GM10248 (cell line): ENCODE measurements at regions of chr2 and their contacts with region 1.

Region 1: GRCh38 chr2:157336137-157337010 is 10.8 kb upstream of the ERMN start:
- DNase-seq: peak; percentile 22
- CTCF ChIP-seq: peak; percentile 66

Region 2: GRCh38 chr2:157349949-157350515 is 13.7 kb after region 1 on chr2:
- CTCF ChIA-PET with region 1: interaction called, 134 read pairs
- POLR2A ChIA-PET with region 1: no interaction called
- DNase-seq: no peak
- CTCF ChIP-seq: no peak

Region 3: DNA sequence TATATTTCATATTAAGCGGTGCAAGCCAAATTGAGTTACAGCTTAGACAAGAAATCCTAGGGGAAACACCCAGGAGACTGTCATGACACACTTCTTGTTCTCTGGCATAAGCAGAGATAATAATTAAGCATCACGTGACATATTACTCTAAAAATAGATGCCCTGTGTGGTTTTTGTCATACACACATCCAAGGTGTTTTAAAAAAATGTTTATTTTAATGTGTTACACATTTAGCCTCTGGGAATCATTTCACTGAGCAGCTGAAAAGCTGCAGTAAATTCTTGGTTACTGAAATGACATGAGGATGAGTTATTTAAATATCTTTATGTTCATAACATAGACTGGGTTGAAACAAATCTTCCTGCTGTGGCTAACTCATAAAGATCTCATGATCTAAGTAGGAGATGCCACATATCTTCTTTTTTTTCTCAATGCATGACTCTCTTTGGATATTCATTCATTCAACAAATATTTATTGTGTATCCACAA is 27.3 kb after region 1 on chr2:
- CTCF ChIA-PET with region 1: interaction called, 43 read pairs
- POLR2A ChIA-PET with region 1: no interaction called
- DNase-seq: no peak
- CTCF ChIP-seq: no peak

Region 4: DNA sequence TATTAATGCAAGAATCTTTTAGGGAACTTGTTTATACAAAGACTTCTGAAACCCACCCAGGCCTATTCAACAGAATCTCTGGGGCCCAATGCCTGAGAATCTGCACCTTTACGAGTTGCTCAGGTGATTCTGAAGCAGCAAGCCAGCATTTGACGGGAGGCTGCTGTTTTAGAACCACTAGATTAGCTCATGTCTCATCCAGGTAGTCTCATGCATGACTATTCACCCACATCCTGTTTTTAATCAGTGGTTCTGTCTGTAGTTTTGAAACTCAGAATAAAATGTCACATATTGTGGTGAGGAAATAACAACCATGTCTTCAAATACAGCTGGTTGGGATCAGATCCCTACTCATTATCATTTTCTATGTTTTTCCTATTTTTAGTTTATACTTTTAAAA is 68.0 kb after region 1 on chr2:
- CTCF ChIA-PET with region 1: interaction called, 11 read pairs
- POLR2A ChIA-PET with region 1: no interaction called
- DNase-seq: peak; percentile 67
- CTCF ChIP-seq: no peak

Region 5: GRCh38 chr2:157413326-157414035 is 77.1 kb after region 1 on chr2:
- CTCF ChIA-PET with region 1: interaction called, 13 read pairs
- POLR2A ChIA-PET with region 1: no interaction called
- DNase-seq: peak; percentile 48
- CTCF ChIP-seq: no peak

Region 6: GRCh38 chr2:157420771-157421323 is 84.5 kb after region 1 on chr2:
- CTCF ChIA-PET with region 1: interaction called, 16 read pairs
- POLR2A ChIA-PET with region 1: interaction called, 5 read pairs
- DNase-seq: no peak
- CTCF ChIP-seq: no peak

Region 7: DNA sequence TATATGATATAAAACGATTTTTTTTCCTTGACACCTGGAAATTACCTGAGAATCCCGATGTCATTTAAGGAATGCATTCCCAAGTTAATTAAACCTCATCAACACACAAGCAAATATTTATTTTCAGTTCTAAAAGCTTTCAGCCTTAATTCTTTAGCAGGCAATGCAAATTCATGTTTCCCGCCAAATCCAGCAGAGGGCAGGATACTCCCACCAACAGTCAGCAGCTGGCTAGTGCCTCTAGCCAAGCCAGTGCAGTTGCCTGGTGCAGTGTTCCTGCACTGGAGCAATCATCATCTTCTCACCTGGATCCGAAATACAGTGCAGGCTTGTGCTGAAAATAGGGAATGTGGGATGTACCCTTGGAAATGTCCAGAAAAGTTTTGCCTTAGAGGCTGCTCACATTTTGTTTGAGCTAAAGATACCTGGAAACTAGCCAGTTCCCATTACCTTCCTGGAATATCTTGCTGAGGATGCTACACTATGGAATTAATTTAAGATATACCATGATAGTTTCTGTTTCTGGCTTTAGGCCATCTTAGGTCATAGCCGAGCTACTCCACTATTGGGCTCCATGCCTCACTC is 155.9 kb after region 1 on chr2:
- CTCF ChIA-PET with region 1: interaction called, 17 read pairs
- POLR2A ChIA-PET with region 1: no interaction called
- DNase-seq: peak; percentile 65
- CTCF ChIP-seq: peak; percentile 67

Region 8: DNA sequence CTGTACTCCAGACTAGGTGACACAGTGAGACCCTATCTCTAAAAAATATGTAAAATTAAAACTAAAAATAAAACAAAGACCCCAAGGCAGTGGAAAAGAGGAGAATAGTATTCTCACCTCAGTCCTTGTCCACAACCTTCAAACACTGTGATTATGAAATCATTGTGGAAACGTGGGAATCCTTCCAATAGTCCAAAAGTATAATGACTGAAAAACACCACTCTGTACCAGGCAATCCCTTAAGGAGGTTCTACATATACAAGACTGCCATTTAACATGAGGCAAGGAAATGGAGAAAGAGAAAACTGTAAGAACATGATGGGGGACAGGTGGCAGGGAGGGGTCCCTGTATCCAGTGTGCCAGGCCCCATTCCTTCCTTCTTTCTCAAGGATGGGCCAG is 473.7 kb after region 1 on chr2:
- CTCF ChIA-PET with region 1: no interaction called
- POLR2A ChIA-PET with region 1: no interaction called
- DNase-seq: no peak
- CTCF ChIP-seq: no peak